Ovary (tissue), 10 donors: ENCODE measurements at regions of chr9 and their contacts with region 1.

Region 1: DNA sequence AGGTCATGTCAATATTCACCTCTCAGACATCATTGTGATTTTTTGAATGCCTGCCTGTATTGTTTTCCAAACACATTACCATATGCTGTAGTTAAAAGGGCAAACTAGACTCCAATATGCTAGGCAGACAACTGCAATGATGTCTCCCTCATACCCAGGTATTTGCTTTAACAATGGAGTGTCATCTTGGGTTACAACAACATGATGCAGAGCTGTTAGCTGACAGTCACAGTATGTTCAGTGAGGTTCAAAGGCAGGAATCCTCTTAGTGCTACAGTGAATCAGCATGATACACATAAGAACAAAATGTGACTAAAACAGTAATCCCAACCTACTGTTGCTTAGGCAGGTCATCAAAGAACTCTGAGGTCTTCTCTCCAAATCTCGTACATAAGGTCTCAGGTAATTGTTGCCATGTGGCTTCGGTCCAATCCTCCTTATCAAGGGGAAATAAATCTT is 24.0 kb downstream of the OR1J1 start:
- DNase-seq: no peak
- H3K4me3 ChIP-seq: no peak overlapping the region
- H3K27ac ChIP-seq: no peak overlapping the region
- H3K4me1 ChIP-seq: no peaks in the 10 kb centered on the region
- H3K27me3 ChIP-seq: no peaks in the 10 kb centered on the region
- CTCF ChIP-seq: no peak
- EP300 ChIP-seq: no peak
- POLR2A ChIP-seq: no peak

Region 2: GRCh38 chr9:122125158-122125508 is 328.6 kb before region 1 on chr9:
- intact Hi-C with region 1: loop called in 2 of 4 experiments (anchors 5 to 10 kb)
- DNase-seq: peak; percentile 67 to 88 (median 80)
- H3K4me3 ChIP-seq: no peak overlapping the region
- H3K27ac ChIP-seq: no peak overlapping the region
- H3K4me1 ChIP-seq: no peaks in the 10 kb centered on the region
- H3K27me3 ChIP-seq: no peaks in the 10 kb centered on the region
- CTCF ChIP-seq: peak; percentile 73 to 84 (median 82)
- EP300 ChIP-seq: no peak
- POLR2A ChIP-seq: no peak